Endothelial cell of umbilical vein (primary cell): ENCODE measurements at regions of chr10 and their contacts with region 1.

Region 1: DNA sequence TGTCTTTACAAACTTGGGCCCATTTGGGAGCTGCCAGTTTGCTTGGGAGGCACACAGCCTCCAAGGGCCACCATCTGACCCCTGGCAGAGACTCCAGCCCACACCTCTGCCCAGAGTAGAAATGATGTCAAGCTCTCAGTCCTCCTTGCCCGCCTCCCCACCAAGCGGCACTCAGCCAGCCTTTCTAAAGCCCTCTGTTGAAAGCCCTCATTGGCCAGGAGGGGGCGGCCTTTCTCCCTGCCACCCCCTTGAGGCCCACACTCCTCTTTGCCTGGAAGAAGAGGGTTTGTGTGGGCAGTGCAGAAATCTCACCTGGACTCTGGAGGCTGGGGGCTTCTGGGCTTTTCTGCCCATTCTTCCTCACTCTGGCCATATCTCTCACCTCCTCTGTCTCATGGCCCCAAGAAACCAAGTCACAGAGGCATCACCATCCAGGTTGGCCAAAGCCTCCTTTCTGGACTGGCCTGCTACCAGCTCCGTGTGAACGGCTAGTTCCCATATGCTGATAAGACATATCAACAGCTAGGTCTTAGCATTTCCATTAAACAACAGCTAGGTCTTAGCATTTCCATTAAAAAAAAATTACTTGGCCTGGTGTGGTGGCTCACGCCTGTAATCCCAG is 36.1 kb downstream of the UBTD1 start:
- DNase-seq: peak; percentile 55
- H3K4me3 ChIP-seq: no peak overlapping the region
- H3K27ac ChIP-seq: no peak overlapping the region
- H3K4me1 ChIP-seq: peaks cover 9% of the 10 kb centered on the region
- H3K27me3 ChIP-seq: no peaks in the 10 kb centered on the region
- CTCF ChIP-seq: peak; percentile 64 to 82
- POLR2A ChIP-seq: no peak

Region 2: DNA sequence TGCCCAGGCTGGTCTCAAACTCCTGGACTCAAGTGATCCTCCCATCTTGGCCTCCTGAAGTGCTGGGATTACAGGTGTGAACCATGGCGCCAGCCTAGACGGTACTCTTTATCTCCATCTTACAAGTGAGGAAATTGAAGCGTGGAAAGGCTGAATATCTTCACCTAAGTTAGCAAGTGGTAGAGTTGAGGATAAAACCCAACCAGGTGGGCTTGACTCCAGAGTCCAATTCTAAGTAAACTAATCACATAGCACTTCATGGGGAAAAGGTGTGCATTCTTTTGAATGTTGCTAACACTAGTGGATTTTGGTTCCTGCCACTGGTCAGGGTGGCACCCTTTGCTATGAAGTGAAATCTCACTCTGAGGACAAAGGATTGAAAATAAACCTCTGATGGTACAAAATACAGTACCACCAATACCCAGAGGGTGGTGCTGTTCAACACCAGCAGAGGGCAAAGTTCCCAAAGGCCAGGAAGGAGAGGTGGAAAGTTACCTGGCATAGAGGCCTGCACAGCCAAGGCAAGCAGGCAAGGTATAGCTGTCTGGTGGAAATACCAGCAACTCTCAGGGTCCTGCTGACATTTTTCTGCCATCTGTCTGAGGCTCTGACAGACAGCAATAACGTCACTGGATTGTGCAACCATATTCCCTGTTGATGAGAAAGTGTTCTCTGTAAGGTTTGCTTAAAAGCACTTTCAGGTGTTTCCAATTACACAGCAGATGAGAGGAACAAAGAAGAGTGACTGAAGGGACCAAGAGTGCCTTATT is 71.3 kb before region 1 on chr10:
- CTCF ChIA-PET with region 1: interaction called, 10 read pairs
- POLR2A ChIA-PET with region 1: no interaction called
- dilution Hi-C with region 1: no loop called
- intact Hi-C with region 1: no loop called
- DNase-seq: peak; percentile 68
- H3K4me3 ChIP-seq: no peak overlapping the region
- H3K27ac ChIP-seq: no peak overlapping the region
- H3K4me1 ChIP-seq: peaks cover 3% of the 10 kb centered on the region
- H3K27me3 ChIP-seq: no peaks in the 10 kb centered on the region
- CTCF ChIP-seq: peak; percentile 75 to 76
- POLR2A ChIP-seq: no peak

Region 3: DNA sequence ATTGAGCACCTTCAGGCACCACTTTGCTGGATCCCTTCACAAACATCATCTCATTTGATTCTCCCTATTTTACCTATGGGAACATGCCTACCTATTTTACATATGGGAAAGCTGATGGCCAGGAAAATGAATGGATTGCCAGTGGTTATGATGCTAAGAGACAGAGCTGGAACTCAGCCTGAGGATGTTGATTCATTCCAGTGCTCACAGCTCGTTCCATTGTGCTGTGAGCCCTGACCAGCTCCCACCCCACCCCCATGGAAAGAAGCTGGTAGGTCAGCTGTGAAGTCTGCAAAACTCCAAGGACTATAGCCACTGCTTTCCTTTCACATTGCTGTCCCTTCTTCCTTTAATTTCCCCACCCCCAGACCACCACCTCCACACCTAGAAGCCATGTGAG is 26.5 kb before region 1 on chr10:
- CTCF ChIA-PET with region 1: interaction called, 10 read pairs
- POLR2A ChIA-PET with region 1: no interaction called
- dilution Hi-C with region 1: no loop called
- intact Hi-C with region 1: no loop called
- DNase-seq: peak; percentile 78
- H3K4me3 ChIP-seq: no peak overlapping the region
- H3K27ac ChIP-seq: no peak overlapping the region
- H3K4me1 ChIP-seq: peaks cover 9% of the 10 kb centered on the region
- H3K27me3 ChIP-seq: no peaks in the 10 kb centered on the region
- CTCF ChIP-seq: no peak
- POLR2A ChIP-seq: no peak

Region 4: DNA sequence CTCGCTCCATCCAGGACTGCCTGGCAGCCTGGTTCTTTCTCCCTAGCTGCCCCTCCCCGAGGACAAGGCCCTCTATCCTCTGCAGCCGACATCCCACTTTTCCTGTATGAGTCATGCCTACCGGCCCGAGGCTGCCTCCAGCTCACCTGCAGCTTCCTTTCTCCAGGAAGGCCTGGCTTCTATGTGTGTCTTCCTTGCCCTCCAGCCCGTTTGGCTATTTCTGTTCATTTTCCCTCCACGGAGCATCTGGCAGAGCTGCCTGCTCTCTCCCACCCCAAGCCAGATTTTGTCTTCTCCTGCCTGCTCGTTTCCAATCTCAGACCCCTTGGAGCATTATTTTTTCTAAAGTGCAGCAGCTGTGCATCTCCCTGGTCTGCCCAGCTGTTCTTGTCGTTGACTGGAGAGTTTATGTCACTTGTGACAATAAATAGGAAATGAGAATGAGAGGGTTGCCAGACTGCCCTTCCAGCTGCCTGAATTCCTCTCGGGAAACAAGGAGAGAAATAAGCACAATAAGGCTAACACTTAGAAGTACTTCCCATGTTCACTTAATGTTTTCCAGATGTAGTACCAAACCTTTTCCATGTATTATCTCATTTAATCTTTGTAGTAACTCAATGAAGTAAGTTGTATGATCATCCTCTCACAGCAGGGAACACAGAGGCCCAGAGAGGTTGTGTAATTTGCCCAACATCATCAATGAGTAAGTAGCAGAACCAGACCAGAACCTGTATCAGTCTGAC is 16.4 kb before region 1 on chr10:
- CTCF ChIA-PET with region 1: interaction called, 28 read pairs
- POLR2A ChIA-PET with region 1: interaction called, 5 read pairs
- dilution Hi-C with region 1: no loop called
- intact Hi-C with region 1: no loop called
- DNase-seq: peak; percentile 64
- H3K4me3 ChIP-seq: no peak overlapping the region
- H3K27ac ChIP-seq: peak overlapping the region; percentile 56
- H3K4me1 ChIP-seq: peaks cover 28% of the 10 kb centered on the region
- H3K27me3 ChIP-seq: no peaks in the 10 kb centered on the region
- CTCF ChIP-seq: no peak
- POLR2A ChIP-seq: no peak